ENCODE measurements at regions of chr4 and their contacts with region 1.

Region 1: GRCh38 chr4:42568610-42569207 is 88.2 kb downstream of the ATP8A1 start:
- DNase-seq: no peak
- ATAC-seq: peak; percentile 69

Region 2: DNA sequence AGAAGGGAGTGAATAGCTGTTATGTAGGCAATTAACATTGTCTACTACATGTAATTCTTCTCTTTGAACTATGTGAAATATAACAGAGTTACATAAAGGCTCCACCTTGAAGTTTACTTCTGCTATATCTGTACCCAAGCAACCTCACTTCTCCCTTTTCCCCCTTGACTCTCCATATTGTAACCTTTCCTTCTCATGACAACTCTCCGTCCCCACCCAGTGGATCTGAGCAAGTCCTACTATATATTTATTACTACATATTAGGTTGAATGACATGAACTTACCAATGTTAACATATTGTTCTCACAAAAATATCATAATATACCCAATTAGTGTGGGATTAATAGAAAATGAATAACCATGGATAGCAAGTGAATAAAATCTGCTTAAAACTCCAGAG is 181.4 kb after region 1 on chr4:
- intact Hi-C with region 1: loop called (anchors 1 kb)
- DNase-seq: no peak
- ATAC-seq: peak; percentile 72

Region 3: GRCh38 chr4:42865572-42866189 is 297.0 kb after region 1 on chr4:
- intact Hi-C with region 1: loop called (anchors 2 kb)
- DNase-seq: no peak
- ATAC-seq: no peak